ENCODE measurements at regions of chr10 and their contacts with region 1.

Region 1: DNA sequence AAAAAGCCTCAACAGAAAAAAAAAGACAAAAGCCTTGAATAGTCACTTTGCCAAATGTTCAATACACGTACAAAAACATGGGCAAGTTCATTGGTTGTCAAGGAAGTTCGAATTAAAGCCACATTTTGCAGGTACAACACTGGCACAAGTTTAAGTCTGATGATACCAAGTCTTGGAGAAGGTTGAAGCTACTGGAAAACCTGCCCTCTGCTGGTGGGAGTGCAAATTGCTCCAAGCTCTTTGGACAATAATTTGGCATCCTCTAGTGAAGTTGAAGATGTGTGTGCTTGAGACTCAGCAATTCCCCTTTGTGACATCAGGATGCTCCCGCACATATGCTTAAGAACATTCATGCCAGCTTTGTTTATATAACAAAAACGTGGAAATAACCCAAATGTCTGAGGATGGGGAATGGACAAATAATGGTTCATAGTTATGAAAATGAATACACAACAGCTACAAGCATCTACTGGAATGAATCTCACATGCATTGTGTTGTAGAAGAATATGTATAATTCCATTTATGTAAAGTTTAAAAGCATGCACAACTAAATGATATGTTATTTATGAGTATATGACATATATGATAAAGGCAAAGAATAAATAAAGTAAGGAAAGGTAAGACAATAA is 120.0 kb upstream of the PLPP4 start:
- DNase-seq: peak; percentile 64
- ATAC-seq: no peak
- H3K4me3 Mint-ChIP-seq: no peak overlapping the region
- H3K27ac Mint-ChIP-seq: no peak overlapping the region
- H3K4me1 Mint-ChIP-seq: no peaks in the 10 kb centered on the region
- H3K27me3 Mint-ChIP-seq: peaks cover 7% of the 10 kb centered on the region

Region 2: DNA sequence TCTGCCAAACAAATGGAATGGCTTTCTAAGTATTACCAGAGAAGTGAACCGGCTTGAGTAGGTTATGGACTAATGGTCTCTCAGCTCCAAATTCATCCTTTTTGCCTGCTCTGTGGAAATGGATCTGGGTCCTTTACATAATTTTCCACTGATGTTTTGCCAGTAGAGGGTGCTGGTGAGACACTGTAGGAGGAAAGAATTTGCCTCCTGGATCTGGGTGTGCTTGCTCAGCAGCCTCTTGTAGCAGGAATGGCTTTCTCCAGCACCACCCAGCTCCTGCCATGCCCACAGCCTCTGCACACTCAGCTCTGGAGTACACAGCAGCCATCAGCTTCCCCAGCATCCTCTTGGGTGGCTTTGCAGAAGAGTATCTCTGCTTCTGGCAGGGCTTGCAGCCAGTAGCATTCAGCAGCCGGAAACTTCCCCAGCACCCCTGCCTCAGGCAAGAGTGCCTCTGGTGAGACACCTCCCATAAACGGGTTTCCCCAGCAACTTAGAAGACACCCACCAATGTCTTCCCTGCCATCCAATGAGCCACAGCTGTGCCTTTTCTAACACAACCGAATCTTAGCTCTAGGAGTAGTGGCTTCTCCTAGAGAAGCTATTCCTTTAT is 115.0 kb before region 1 on chr10:
- CTCF ChIA-PET with region 1: interaction called, 11 read pairs
- POLR2A ChIA-PET with region 1: no interaction called
- DNase-seq: peak; percentile 39
- ATAC-seq: no peak
- H3K4me3 Mint-ChIP-seq: no peak overlapping the region
- H3K27ac Mint-ChIP-seq: no peak overlapping the region
- H3K4me1 Mint-ChIP-seq: no peaks in the 10 kb centered on the region
- H3K27me3 Mint-ChIP-seq: peaks cover 2% of the 10 kb centered on the region

Measured in activated CD8-positive, alpha-beta T cell treated with anti-CD3 and anti-CD28 coated beads, Interleukin-2, amount 10 ng/mL, durations not matched to agents 7 days and 5 days (primary cell).